BJ (cell line): ENCODE measurements at regions of chr4 and their contacts with region 1.

Region 1: DNA sequence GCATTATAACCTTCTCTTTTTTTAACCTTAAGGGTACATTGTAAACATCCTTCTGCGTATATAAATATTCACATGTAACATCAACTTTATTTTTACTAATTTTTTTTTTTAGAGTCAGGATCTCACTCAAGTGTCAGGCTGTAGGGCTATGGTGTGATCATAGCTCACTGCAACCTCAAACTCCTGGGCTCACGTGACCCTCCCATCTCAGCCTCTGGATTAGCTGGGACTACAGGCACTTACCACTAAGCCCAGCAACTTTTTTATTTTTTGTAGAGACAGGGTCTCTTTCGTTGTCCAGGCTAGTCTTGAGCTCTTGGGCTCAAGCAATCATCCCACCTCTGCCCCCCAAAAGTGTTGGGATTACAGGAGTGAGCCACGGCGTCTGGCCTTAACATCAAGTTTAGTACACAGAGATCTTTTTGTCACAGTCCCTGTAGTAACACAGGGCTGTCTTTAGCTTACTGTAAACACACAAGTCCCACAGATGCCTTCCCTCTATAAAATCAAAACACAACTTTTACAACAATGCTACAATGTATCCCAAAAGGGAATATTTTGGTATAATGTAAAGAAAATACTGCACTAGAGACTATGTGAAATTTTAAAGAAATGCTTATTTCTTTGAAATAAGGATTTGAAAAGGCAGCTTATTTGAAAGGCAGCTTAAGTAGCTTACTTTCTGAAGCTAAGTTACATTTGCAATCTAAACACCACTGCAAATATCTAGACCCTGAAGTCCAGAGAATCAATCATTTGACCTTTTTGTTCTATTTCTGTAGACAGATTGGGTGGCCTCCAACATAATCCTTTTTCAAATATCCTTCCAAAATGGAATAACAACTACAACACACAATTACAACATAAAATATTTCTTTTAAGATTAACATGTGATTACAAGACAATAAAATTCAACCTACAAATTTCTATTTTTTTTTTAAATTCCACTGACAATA is 116.0 kb downstream of the APBB2 start:
- DNase-seq: no peak
- H3K4me3 ChIP-seq: no peak overlapping the region
- H3K27me3 ChIP-seq: no peaks in the 10 kb centered on the region
- CTCF ChIP-seq: no peak

Region 2: GRCh38 chr4:41111791-41112190 is 13.4 kb after region 1 on chr4:
- CTCF ChIA-PET with region 1: no interaction called
- POLR2A ChIA-PET with region 1: no interaction called
- DNase-seq: no peak
- H3K4me3 ChIP-seq: no peak overlapping the region
- H3K27me3 ChIP-seq: no peaks in the 10 kb centered on the region
- CTCF ChIP-seq: no peak

Region 3: GRCh38 chr4:41146716-41147506 is 48.5 kb after region 1 on chr4:
- CTCF ChIA-PET with region 1: no interaction called
- POLR2A ChIA-PET with region 1: interaction called, 13 read pairs
- DNase-seq: no peak
- H3K4me3 ChIP-seq: no peak overlapping the region
- H3K27me3 ChIP-seq: no peaks in the 10 kb centered on the region
- CTCF ChIP-seq: no peak